ENCODE measurements at regions of chr13 and their contacts with region 1.

Region 1: GRCh38 chr13:71171740-71172139 is 695.3 kb downstream of the DACH1 start:
- ATAC-seq: no peak
- H3K4me3 ChIP-seq: no peak overlapping the region
- H3K27ac ChIP-seq: no peak overlapping the region
- H3K4me1 ChIP-seq: peaks cover 3 to 17% of the 10 kb centered on the region in 2 donors

Region 2: GRCh38 chr13:71079638-71080037 is 92.1 kb before region 1 on chr13:
- in situ Hi-C with region 1: loop called in 1 of 9 experiments (anchors 25 kb)
- ATAC-seq: no peak
- H3K4me3 ChIP-seq: no peak overlapping the region
- H3K27ac ChIP-seq: no peak overlapping the region
- H3K4me1 ChIP-seq: no peaks in the 10 kb centered on the region

Region 3: DNA sequence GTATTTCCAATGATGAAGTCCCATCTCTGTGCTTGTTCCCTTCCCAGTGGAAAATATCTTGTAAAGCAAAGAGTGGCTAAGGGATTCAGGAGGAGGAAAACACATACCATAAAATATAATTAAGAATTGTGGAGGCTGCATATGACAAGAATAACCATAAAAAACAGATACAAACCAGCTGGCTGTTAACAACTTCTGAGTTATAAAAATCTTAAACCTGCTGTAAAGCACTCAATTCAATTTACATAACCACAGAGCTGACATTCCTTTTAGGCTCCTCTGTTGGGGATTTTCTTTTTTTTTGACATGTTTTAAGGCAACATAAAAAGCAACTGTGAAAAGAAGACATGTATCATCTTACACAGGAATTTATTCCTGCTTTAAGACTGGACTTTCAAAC is 487.7 kb after region 1 on chr13:
- in situ Hi-C with region 1: no loop called
- ATAC-seq: peak in 1 of 8 experiments; percentile 75
- H3K4me3 ChIP-seq: no peak overlapping the region
- H3K27ac ChIP-seq: no peak overlapping the region
- H3K4me1 ChIP-seq: peaks cover 5 to 12% of the 10 kb centered on the region in 2 donors

Measured in motor neuron (in vitro differentiated cells).